Natural killer cell (primary cell): ENCODE measurements at regions of chr4 and their contacts with region 1.

Region 1: DNA sequence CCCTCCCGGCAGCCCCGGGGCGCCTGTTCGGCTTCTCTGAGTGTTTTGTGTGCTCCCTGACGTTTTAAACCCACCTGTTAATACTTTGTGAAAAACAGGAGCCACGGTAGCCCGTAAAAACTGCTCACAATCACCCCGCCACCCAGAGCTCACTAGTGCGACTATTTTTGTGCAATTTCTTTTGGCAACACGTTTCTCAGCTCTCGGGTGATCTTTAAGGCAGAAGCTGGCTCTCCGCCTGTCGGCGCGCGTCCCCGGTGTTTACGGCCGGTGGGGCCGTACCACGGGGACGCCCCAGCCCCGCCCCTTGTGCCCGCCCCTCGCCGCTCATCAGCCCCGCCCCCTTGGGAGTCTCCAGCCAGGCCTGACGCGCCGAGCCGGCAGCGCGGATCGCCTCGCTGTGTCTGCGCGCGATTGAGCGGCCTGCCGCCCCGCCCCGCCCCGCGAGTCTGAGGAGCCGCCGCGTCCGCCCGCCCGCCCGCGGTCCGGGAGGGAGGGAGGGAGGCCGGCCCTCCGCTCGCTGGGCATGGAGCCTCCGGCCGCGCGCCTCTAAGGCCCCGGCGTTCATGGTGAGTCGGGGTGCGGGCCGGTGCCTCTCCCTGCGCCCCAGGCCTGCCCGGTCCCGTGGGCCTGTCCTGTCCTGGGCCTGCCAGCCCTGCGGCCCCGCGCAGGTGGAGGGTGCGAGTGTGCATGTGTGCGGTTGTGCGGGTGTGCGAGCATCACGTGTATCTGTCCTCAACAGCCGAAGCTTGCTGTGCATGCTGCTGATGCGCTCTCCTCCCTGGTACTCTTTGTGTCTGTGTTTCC is 56.2 kb upstream of the TADA2B start:
- DNase-seq: peak; percentile 89 to 97
- ATAC-seq: peak; percentile 96 to 99 (median 96)
- H3K4me3 ChIP-seq: peak overlapping the region; percentile 63
- H3K4me3 Mint-ChIP-seq: peak overlapping the region; percentile 97
- H3K27ac ChIP-seq: peak overlapping the region; percentile 62
- H3K27ac Mint-ChIP-seq: peak overlapping the region; percentile 93 to 94
- H3K4me1 ChIP-seq: peaks cover 33% of the 10 kb centered on the region
- H3K4me1 Mint-ChIP-seq: peaks cover 61 to 65% of the 10 kb centered on the region in 2 donors
- H3K27me3 ChIP-seq: no peaks in the 10 kb centered on the region
- H3K27me3 Mint-ChIP-seq: no peaks in the 10 kb centered on the region
- CTCF ChIP-seq: no peak

Region 2: GRCh38 chr4:6716018-6716911 is 270.7 kb before region 1 on chr4 and contains the start of gene BLOC1S4:
- intact Hi-C with region 1: loop called (anchors 2 kb)
- DNase-seq: peak; percentile 88 to 99
- ATAC-seq: peak; percentile 84 to 94 (median 86)
- H3K4me3 ChIP-seq: peak within 1 kb of the TSS; percentile 81
- H3K4me3 Mint-ChIP-seq: peak within 1 kb of the TSS; percentile 98
- H3K27ac ChIP-seq: peak within 1 kb of the TSS; percentile 83
- H3K27ac Mint-ChIP-seq: peak within 1 kb of the TSS; percentile 98
- H3K4me1 ChIP-seq: peaks cover 27% of the 10 kb centered on the region
- H3K4me1 Mint-ChIP-seq: peaks cover 29 to 32% of the 10 kb centered on the region in 2 donors
- H3K27me3 ChIP-seq: no peaks in the 10 kb centered on the region
- H3K27me3 Mint-ChIP-seq: no peaks in the 10 kb centered on the region
- CTCF ChIP-seq: no peak
- total RNA-seq, gene BLOC1S4: 18.9 to 20.1 (median 20.0) TPM

Region 3: DNA sequence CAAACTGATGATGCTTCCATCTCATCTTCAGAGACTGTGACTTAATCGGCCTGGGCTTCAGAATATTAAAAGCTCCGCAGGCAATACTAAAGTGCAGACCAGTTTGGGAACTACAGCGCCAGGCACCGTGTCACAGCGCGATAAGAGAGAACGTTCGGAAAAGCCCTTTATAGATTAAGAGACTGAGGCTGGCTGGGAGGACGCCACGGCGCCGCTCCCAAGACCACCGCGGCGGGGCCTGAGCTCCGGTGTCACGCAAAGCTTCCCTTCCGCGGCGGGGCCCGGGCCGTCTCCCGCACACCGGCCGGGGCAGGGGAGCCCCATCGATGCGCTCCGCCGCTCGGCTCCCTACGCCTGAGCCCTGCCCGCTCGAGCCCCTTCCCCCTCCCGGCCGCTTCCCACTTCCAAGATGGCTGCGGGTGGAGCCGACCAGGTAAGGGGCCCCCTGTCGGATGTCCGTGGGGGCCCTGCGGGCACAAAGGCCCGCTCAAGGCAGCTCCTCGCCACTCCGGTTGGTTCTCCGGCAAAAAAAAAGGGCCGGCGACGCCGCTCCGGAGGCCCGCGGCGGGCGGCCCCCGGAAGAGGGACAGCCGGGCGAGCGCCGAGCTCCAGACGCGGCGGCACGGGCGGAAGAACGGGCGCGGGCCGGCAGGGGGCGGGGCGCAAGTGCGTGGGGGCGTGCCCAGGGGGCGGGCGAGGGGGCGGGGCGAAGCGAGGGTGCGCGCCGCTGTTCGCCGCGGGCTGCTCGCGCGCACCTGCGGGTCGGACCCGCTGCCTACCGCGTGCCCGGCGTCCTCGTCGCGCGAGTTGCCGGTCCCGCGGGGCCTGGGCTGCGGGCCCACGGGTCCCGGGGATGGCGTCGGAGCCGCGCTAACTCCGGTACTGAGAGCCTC is 77.7 kb before region 1 on chr4 and contains the start of gene TBC1D14:
- intact Hi-C with region 1: loop called (anchors 1 kb)
- DNase-seq: peak; percentile 83 to 91
- ATAC-seq: peak; percentile 88 to 96 (median 89)
- H3K4me3 ChIP-seq: peak within 1 kb of the TSS; percentile 75
- H3K4me3 Mint-ChIP-seq: peak within 1 kb of the TSS; percentile 94
- H3K27ac ChIP-seq: peak within 1 kb of the TSS; percentile 99
- H3K27ac Mint-ChIP-seq: peak within 1 kb of the TSS; percentile 83 to 90
- H3K4me1 ChIP-seq: peaks cover 39% of the 10 kb centered on the region
- H3K4me1 Mint-ChIP-seq: peaks cover 33 to 44% of the 10 kb centered on the region in 2 donors
- H3K27me3 ChIP-seq: no peaks in the 10 kb centered on the region
- H3K27me3 Mint-ChIP-seq: no peaks in the 10 kb centered on the region
- CTCF ChIP-seq: no peak
- total RNA-seq, gene TBC1D14: 36.0 to 54.7 (median 53.2) TPM

Region 4: GRCh38 chr4:6942238-6942800 is 44.7 kb before region 1 on chr4:
- intact Hi-C with region 1: loop called (anchors 2 kb)
- DNase-seq: peak in 1 of 2 donors; percentile 71
- ATAC-seq: peak; percentile 63 to 80 (median 70)
- H3K4me3 ChIP-seq: no peak overlapping the region
- H3K4me3 Mint-ChIP-seq: peak overlapping the region; percentile 90
- H3K27ac ChIP-seq: peak overlapping the region; percentile 63
- H3K27ac Mint-ChIP-seq: peak overlapping the region; percentile 88 to 91
- H3K4me1 ChIP-seq: peaks cover 73% of the 10 kb centered on the region
- H3K4me1 Mint-ChIP-seq: peaks cover 60 to 74% of the 10 kb centered on the region in 2 donors
- H3K27me3 ChIP-seq: no peaks in the 10 kb centered on the region
- H3K27me3 Mint-ChIP-seq: no peaks in the 10 kb centered on the region
- CTCF ChIP-seq: no peak

Region 5: GRCh38 chr4:7042697-7043464 is 55.9 kb after region 1 on chr4 and contains the start of gene TADA2B:
- intact Hi-C with region 1: loop called (anchors 1 kb)
- DNase-seq: peak; percentile 90 to 95
- ATAC-seq: peak; percentile 76 to 91 (median 83)
- H3K4me3 ChIP-seq: peak within 1 kb of the TSS; percentile 85
- H3K4me3 Mint-ChIP-seq: peak within 1 kb of the TSS; percentile 95
- H3K27ac ChIP-seq: peak within 1 kb of the TSS; percentile 65
- H3K27ac Mint-ChIP-seq: peak within 1 kb of the TSS; percentile 84 to 95
- H3K4me1 ChIP-seq: peaks cover 51% of the 10 kb centered on the region
- H3K4me1 Mint-ChIP-seq: peaks cover 39 to 58% of the 10 kb centered on the region in 2 donors
- H3K27me3 ChIP-seq: no peaks in the 10 kb centered on the region
- H3K27me3 Mint-ChIP-seq: no peaks in the 10 kb centered on the region
- CTCF ChIP-seq: no peak
- total RNA-seq, gene TADA2B: 22.7 to 36.3 (median 35.9) TPM